Activated T-helper 2 cell treated with anti-CD3 and anti-CD28 coated beads, Interferon-gamma antibody, Interleukin-2, Interleukin-4, amounts not matched to agents 10 μg/mL and 5 μg/mL and 100 μg/mL, durations not matched to agents 14 hours and 24 hours and 36 hours (primary cell): ENCODE measurements at regions of chr17 and their contacts with region 1.

Region 1: DNA sequence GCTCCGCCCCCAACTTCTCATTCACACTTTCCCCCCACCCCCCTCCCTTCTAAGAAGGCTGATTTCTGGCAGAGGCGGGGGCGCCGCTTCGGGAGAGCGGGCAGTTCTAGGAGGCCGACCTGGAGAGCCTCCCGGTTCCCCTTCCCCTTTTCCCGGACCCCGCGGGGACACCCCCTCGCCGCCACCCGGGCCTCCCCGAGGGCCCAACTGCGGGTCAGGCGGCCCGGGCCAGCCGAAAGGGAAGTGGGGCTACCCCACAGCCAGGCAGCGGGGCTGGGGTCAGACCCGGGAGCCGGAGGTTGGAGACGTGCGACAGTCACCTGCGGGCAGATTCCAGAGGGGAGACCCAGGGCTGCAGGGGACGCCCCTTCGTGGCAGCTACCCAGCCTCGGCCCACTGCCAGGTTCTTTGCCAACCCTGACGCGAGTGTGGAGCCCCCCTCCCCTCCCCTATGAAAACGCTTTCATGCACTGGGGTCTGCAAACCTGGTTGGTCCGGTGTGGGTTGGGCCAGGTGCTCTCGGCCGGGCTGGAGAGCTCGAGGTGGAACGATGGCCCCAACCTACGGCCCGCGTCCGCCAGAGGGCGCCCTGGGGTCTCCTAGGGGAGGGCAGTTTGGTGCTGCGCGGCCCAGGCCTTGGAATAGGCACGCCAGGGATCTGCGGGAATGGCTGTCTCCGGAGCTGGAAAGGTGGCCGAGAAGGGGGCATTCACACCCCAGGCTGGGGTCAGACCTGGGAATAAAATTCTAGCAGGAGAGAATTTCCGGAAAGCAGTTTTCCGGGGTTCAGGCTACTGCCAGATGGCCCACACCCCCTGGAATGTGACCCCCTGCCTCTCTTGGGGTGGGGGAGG is 721 bp upstream of the SOCS3 start:
- DNase-seq: peak; percentile 82
- H3K4me3 Mint-ChIP-seq: peak overlapping the region; percentile 83
- H3K27ac Mint-ChIP-seq: peak overlapping the region; percentile 90
- H3K4me1 Mint-ChIP-seq: peaks cover 33% of the 10 kb centered on the region
- H3K27me3 Mint-ChIP-seq: peaks cover 11% of the 10 kb centered on the region

Region 2: DNA sequence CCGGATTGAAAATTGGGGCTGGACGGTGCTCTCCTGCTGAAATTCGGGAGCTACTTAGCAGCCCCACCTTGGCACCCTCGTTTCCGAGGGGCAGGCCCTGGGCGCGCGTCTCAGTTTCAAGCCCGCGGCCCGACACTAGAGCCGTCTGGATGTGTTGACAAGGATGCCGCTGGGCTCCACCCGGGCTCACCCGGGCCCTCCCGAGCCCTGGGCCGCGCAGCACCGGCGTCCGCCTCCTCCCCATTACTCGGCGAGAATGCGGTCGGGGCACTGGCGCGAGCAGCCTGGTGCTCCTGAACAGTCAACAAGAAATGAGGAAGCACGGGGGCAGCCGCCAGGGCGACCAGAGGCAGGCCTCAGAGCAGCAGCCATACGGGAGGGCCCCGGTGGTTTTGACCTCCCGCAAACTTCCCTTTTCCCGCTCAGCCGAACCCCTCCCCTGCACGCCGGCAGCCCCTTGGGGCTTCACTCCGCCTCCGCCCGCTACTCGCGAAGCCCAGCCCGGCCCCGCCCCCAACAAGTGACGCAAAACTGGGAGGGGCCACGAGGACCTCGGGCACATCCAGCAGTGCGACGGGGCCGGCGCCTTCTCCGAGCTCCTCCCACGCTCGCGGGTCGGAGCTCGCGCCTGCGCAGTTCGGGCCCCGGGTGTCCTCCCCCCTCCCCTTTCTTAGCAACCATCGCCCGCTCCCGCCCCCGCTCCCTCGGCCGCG is 1220.3 kb before region 1 on chr17:
- intact Hi-C with region 1: loop called (anchors 5 kb)
- DNase-seq: peak; percentile 99
- H3K4me3 Mint-ChIP-seq: peak overlapping the region; percentile 68
- H3K27ac Mint-ChIP-seq: peak overlapping the region; percentile 96
- H3K4me1 Mint-ChIP-seq: peaks cover 49% of the 10 kb centered on the region
- H3K27me3 Mint-ChIP-seq: no peaks in the 10 kb centered on the region

Region 3: GRCh38 chr17:78258323-78259191 is 102.0 kb before region 1 on chr17:
- intact Hi-C with region 1: loop called (anchors 2 kb)
- DNase-seq: peak; percentile 66
- H3K4me3 Mint-ChIP-seq: peak overlapping the region; percentile 68
- H3K27ac Mint-ChIP-seq: peak overlapping the region; percentile 81
- H3K4me1 Mint-ChIP-seq: peaks cover 33% of the 10 kb centered on the region
- H3K27me3 Mint-ChIP-seq: no peaks in the 10 kb centered on the region

Region 4: GRCh38 chr17:78315355-78316114 is 45.1 kb before region 1 on chr17:
- intact Hi-C with region 1: loop called (anchors 1 kb)
- DNase-seq: no peak
- H3K4me3 Mint-ChIP-seq: peak overlapping the region; percentile 65
- H3K27ac Mint-ChIP-seq: peak overlapping the region; percentile 59
- H3K4me1 Mint-ChIP-seq: peaks cover 37% of the 10 kb centered on the region
- H3K27me3 Mint-ChIP-seq: peaks cover 21% of the 10 kb centered on the region

Region 5: GRCh38 chr17:78421484-78422266 is 61.1 kb after region 1 on chr17:
- intact Hi-C with region 1: loop called (anchors 1 kb)
- DNase-seq: peak; percentile 61
- H3K4me3 Mint-ChIP-seq: no peak overlapping the region
- H3K27ac Mint-ChIP-seq: peak overlapping the region; percentile 71
- H3K4me1 Mint-ChIP-seq: peaks cover 21% of the 10 kb centered on the region
- H3K27me3 Mint-ChIP-seq: no peaks in the 10 kb centered on the region